CD14-positive monocyte (primary cell): ENCODE measurements at regions of chr15 and their contacts with region 1.

Region 1: DNA sequence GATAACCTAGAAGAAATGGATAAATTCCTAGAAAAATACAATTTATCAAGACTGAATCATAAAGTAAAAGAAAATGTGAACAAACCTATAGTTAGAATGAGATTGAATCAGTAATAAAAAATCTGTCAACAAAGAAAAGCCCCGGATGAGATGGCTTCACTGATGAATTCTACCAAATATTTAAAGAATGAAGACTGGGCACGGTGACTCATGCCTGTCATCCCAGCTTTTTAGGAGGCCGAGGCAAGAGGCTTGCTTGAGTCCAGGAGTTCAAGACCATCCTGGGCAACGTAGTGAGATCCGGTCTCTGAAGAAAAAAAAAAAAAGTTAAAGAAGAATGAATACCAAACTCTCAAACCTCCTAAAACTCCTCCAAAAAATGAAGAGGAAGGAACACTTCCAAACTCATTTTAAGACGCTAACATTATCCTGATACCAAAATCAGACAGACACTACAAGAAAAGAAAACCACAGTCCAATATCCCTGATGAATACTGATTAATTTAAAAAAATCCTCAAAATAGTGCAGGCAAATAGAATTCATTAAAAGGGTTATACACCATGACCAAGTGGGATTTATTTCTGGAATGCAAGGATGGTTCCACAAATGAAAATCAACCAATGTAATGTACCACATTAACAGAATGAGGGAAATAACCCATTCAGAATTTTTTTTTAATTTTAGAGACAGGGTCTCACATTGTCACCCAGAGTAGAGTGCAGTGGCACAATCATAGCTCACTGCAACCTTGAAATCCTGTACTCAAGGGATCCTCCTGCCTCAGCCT is 17.5 kb upstream of the AP4E1 start:
- DNase-seq: no peak
- H3K4me3 ChIP-seq: no peak overlapping the region
- H3K4me3 Mint-ChIP-seq: no peak overlapping the region
- H3K27ac ChIP-seq: no peak overlapping the region
- H3K27ac Mint-ChIP-seq: no peak overlapping the region
- H3K4me1 ChIP-seq: peaks cover 3 to 19% of the 10 kb centered on the region in 2 donors
- H3K4me1 Mint-ChIP-seq: peaks cover 15% of the 10 kb centered on the region
- H3K27me3 ChIP-seq: no peaks in the 10 kb centered on the region
- H3K27me3 Mint-ChIP-seq: peaks cover 0 to 9% (median 0%) of the 10 kb centered on the region in 3 donors
- CTCF ChIP-seq: no peak

Region 2: GRCh38 chr15:49215768-49216739 is 1674.9 kb before region 1 on chr15:
- intact Hi-C with region 1: no loop called
- DNase-seq: no peak
- H3K4me3 ChIP-seq: no peak overlapping the region
- H3K4me3 Mint-ChIP-seq: no peak overlapping the region
- H3K27ac ChIP-seq: no peak overlapping the region
- H3K27ac Mint-ChIP-seq: peak overlapping the region in 3 of 7 donors; percentile 38 to 72 (median 38)
- H3K4me1 ChIP-seq: no peaks in the 10 kb centered on the region
- H3K4me1 Mint-ChIP-seq: no peaks in the 10 kb centered on the region
- H3K27me3 ChIP-seq: no peaks in the 10 kb centered on the region
- H3K27me3 Mint-ChIP-seq: no peaks in the 10 kb centered on the region
- CTCF ChIP-seq: no peak

Region 3: DNA sequence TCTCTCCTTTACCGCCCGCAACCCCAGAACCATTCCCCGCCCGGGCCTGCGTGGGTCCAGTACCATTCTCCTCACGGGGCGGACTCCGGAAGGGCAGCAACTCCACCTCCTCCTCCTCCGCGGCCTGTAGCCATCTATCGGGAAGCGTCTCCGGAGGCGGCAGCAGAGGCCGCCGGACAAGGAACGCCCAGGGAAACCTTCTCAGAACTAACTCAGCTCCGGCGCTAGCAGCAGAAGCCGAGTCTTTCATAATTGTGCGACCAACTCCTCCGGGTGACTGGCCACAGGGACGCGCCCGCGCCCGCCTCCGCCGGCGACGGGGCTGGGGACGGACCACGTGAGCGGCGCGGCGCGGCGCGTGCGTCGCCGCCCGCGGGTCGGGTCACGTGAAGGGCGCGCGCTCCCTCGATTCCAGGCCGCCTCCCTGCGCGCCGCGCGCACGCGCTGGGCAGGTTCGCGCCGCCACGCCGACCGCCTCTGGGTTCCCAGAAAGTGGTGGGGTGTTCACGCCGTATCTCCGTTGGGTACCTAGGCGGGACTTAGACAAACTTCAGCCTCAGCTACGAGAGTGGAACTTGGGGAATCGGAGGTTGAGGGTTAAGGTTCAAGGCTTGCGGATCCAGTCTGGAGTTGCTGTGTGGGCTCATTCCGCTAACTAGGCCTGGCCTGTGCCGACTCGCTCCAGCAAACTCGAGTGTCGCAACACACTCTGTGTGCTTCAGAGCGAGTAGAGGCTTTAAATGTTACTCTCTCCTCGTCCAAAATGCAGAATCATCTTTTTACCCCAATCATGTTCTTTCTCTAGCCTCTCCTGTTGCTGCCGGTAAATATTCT is 204.3 kb before region 1 on chr15 and contains the start of gene TRPM7:
- intact Hi-C with region 1: loop called in 1 of 2 experiments (anchors 5 kb)
- DNase-seq: peak; percentile 89 to 94 (median 92)
- H3K4me3 ChIP-seq: peak within 1 kb of the TSS; percentile 72 to 95 (median 94)
- H3K4me3 Mint-ChIP-seq: peak within 1 kb of the TSS; percentile 98 to 99
- H3K27ac ChIP-seq: peak within 1 kb of the TSS; percentile 92 to 98
- H3K27ac Mint-ChIP-seq: peak within 1 kb of the TSS; percentile 94 to 99 (median 99)
- H3K4me1 ChIP-seq: peaks cover 20 to 35% of the 10 kb centered on the region in 2 donors
- H3K4me1 Mint-ChIP-seq: peaks cover 44% of the 10 kb centered on the region
- H3K27me3 ChIP-seq: no peaks in the 10 kb centered on the region
- H3K27me3 Mint-ChIP-seq: peaks cover 0 to 2% (median 0%) of the 10 kb centered on the region in 3 donors
- CTCF ChIP-seq: no peak
- polyA plus RNA-seq, gene TRPM7: 5.5 to 22.4 (median 8.1) TPM

Region 4: GRCh38 chr15:50718700-50719125 is 172.3 kb before region 1 on chr15:
- intact Hi-C with region 1: no loop called
- DNase-seq: no peak
- H3K4me3 ChIP-seq: no peak overlapping the region
- H3K4me3 Mint-ChIP-seq: no peak overlapping the region
- H3K27ac ChIP-seq: no peak overlapping the region
- H3K27ac Mint-ChIP-seq: peak overlapping the region in 1 of 7 donors; percentile 44
- H3K4me1 ChIP-seq: no peaks in the 10 kb centered on the region
- H3K4me1 Mint-ChIP-seq: no peaks in the 10 kb centered on the region
- H3K27me3 ChIP-seq: no peaks in the 10 kb centered on the region
- H3K27me3 Mint-ChIP-seq: no peaks in the 10 kb centered on the region
- CTCF ChIP-seq: no peak

Region 5: DNA sequence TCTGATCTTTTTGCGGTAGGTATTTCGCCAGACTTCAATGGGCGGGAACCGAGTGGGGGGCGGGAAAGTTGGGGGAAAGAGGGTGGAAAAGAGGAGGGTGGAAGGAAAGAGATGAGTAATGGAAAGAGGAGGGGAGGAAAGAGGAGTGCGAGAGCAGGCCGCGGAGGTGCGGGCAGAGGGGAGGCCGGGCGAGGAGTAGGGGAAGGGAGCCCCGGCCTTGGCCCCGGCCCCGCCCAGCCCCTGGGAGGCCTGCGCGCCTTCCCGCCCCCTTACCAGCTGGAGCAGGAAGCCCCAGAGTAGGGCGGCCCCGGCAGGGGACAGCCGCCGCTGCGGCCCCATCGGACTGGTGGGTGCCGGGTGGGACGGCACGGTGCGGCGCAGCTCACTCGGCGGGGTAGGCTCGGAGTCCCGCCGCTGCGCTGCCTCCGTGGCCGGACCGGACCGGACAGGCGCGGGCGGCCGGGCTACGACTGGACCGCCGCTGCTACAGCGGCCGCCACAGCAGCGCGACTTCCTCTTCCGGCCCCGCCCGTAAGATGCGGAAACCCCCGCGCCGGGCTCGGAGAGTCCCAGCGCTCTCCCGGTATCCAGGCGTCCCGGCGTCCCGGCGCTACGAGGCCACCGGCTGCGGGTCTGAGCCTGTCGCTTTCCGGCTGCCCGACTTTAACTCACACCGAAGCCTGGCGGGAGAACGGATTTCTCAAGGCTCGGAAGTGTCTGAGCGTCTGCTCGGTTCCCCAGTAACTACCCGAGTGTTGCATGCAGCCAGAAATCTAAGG is 125.6 kb before region 1 on chr15 and contains the start of gene SPPL2A:
- intact Hi-C with region 1: loop called (anchors 5 kb)
- DNase-seq: peak; percentile 81 to 87 (median 83)
- H3K4me3 ChIP-seq: peak within 1 kb of the TSS; percentile 82 to 91 (median 89)
- H3K4me3 Mint-ChIP-seq: peak within 1 kb of the TSS; percentile 89 to 94
- H3K27ac ChIP-seq: peak within 1 kb of the TSS; percentile 87 to 98
- H3K27ac Mint-ChIP-seq: peak within 1 kb of the TSS; percentile 90 to 98 (median 97)
- H3K4me1 ChIP-seq: peaks cover 24 to 34% of the 10 kb centered on the region in 2 donors
- H3K4me1 Mint-ChIP-seq: peaks cover 36% of the 10 kb centered on the region
- H3K27me3 ChIP-seq: no peaks in the 10 kb centered on the region
- H3K27me3 Mint-ChIP-seq: peaks cover 1 to 8% (median 7%) of the 10 kb centered on the region in 3 donors
- CTCF ChIP-seq: no peak
- polyA plus RNA-seq, gene SPPL2A: 111 to 204 (median 190) TPM